HCT116 (cell line): ENCODE measurements at regions of chr9 and their contacts with region 1.

Region 1: GRCh38 chr9:132240753-132241493 is 79.1 kb downstream of the NTNG2 start:
- DNase-seq: peak; percentile 93
- ATAC-seq: peak; percentile 90
- H3K4me3 ChIP-seq: peak overlapping the region; percentile 56 to 69
- H3K27ac ChIP-seq: peak overlapping the region; percentile 56; the same call in 1 of the 2 replicates
- H3K4me1 ChIP-seq: peaks cover 13 to 38% of the 10 kb centered on the region in 2 experiments
- H3K27me3 ChIP-seq: no peaks in the 10 kb centered on the region
- CTCF ChIP-seq: no peak
- POLR2A ChIP-seq: no peak
- RAD21 ChIP-seq: no peak

Region 2: DNA sequence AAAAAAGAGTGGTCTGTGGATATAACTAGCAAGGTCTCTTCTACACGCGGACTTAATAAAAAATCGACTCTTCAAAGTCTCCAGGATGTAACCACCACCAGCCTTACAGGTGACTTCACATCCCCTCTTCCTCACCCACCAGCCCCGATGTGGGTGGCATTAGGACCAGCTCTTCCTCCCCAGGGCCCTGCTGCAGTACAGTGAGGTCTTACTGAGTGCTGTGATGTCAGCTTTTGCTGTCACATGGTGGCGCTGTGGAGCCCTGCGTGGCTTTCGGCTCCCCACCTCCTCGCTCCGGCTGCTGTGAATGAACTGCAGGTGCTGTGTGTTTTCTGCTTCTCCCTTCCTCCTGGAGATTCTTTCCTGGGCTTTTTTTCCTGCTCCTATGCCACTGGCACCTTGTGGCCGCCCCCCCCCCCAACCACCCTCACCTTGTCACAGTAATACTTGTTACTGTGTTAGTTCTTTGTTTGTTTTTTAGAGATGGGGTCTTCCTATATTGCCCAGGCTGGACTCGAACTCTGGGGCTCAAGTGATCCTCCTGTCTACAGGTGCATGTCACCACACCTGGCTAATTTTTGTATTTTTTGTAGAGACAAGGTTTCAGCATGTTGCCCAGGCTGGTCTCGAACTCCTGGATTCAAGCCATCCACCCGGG is 485.3 kb before region 1 on chr9:
- CTCF ChIA-PET with region 1: interaction called, 9 read pairs
- POLR2A ChIA-PET with region 1: no interaction called
- RAD21 ChIA-PET with region 1: interaction called in 1 of 2 experiments, 3 read pairs
- intact Hi-C with region 1: loop called (anchors 2 kb)
- DNase-seq: peak; percentile 75
- ATAC-seq: peak; percentile 100
- H3K4me3 ChIP-seq: no peak overlapping the region
- H3K27ac ChIP-seq: no peak overlapping the region
- H3K4me1 ChIP-seq: peaks cover 0 to 4% of the 10 kb centered on the region in 2 experiments; a peak in 2 of 4 replicates
- H3K27me3 ChIP-seq: no peaks in the 10 kb centered on the region
- CTCF ChIP-seq: peak; percentile 86 to 87 (median 86)
- POLR2A ChIP-seq: no peak
- RAD21 ChIP-seq: peak; percentile 62

Region 3: DNA sequence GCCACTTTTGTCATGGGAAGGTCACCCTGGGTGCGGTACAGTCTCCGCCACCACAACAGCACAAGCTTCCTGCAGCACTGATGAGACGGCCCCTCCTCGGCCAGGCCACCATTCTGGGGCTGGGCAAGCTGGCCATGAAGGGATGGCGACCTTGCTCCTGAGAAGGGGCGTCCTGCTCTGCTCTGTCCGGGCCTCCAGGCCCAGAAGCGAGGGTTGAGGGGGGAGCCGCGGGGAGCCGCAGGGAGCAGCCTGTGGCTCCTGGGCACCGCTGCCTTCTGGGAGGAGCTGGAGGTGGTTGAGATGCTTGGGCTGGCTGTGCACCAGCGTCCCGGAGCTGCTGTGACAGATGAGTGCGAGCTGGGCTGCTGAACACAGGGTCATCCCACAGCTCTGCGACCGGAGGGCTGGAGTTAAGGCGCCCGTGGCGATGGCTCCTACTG is 416.7 kb before region 1 on chr9:
- CTCF ChIA-PET with region 1: no interaction called
- POLR2A ChIA-PET with region 1: no interaction called
- RAD21 ChIA-PET with region 1: no interaction called
- intact Hi-C with region 1: no loop called
- DNase-seq: no peak
- ATAC-seq: no peak
- H3K4me3 ChIP-seq: no peak overlapping the region
- H3K27ac ChIP-seq: no peak overlapping the region
- H3K4me1 ChIP-seq: no peaks in the 10 kb centered on the region
- H3K27me3 ChIP-seq: no peaks in the 10 kb centered on the region; the same call in 1 of the 2 replicates
- CTCF ChIP-seq: no peak
- POLR2A ChIP-seq: no peak
- RAD21 ChIP-seq: no peak

Region 4: GRCh38 chr9:132156262-132156661 is 84.7 kb before region 1 on chr9:
- CTCF ChIA-PET with region 1: no interaction called
- POLR2A ChIA-PET with region 1: no interaction called
- RAD21 ChIA-PET with region 1: no interaction called
- intact Hi-C with region 1: no loop called
- DNase-seq: no peak
- ATAC-seq: no peak
- H3K4me3 ChIP-seq: no peak overlapping the region
- H3K27ac ChIP-seq: no peak overlapping the region
- H3K4me1 ChIP-seq: peaks cover 0 to 8% of the 10 kb centered on the region in 2 experiments; a peak in 1 of 4 replicates
- H3K27me3 ChIP-seq: 0 out of 2 replicates have a peak, but pooled peaks cover 5% of the 10 kb centered on the region
- CTCF ChIP-seq: no peak
- POLR2A ChIP-seq: no peak
- RAD21 ChIP-seq: no peak

Region 5: DNA sequence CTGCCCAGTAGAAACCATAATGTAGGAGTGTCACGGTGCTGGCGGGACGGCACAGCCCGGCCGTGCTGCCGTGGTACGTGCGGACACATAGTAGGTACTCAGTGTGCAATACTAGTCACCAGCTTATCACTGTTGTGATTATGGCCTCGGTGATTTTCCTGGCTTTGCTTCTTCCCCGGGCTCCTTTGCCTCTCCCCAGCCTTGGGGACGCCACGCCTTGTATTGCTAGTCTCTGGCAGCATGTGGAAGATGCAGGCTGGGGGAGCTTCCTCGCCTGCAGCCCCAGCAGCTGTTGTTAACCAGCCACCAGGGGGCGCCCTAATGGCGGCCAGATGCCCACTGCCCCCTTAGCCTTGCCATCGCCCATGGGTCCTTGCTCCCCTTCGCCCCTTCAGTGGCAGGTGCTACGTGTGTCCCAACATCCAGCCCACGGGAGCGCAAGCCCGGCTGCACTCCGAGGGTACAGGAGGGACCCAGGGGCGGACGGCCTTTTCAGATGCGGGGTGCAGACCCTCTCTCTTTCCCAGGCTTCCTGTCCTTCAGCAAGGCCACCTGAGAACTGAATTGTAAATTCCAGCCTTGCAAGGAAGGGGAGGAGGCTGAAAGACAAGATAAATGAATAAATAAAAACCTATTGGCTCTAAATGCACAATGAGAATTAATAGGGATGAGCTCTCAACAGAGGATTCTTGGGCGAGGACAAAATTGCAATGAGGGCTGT is 71.1 kb before region 1 on chr9:
- CTCF ChIA-PET with region 1: interaction called, 154 read pairs
- POLR2A ChIA-PET with region 1: interaction called, 3 read pairs
- RAD21 ChIA-PET with region 1: interaction called, 3 to 11 read pairs
- intact Hi-C with region 1: loop called (anchors 1 kb)
- DNase-seq: peak; percentile 29
- ATAC-seq: peak; percentile 80
- H3K4me3 ChIP-seq: no peak overlapping the region
- H3K27ac ChIP-seq: no peak overlapping the region
- H3K4me1 ChIP-seq: no peaks in the 10 kb centered on the region
- H3K27me3 ChIP-seq: no peaks in the 10 kb centered on the region
- CTCF ChIP-seq: peak; percentile 75 to 94 (median 94); a peak in 5 of 6 replicates
- POLR2A ChIP-seq: no peak
- RAD21 ChIP-seq: peak; percentile 73

Region 6: GRCh38 chr9:132214027-132214622 is 26.8 kb before region 1 on chr9:
- CTCF ChIA-PET with region 1: interaction called, 12 read pairs
- POLR2A ChIA-PET with region 1: no interaction called
- RAD21 ChIA-PET with region 1: no interaction called
- intact Hi-C with region 1: no loop called
- DNase-seq: peak; percentile 22
- ATAC-seq: peak; percentile 90
- H3K4me3 ChIP-seq: no peak overlapping the region
- H3K27ac ChIP-seq: 0 out of 2 replicates have a peak overlapping the region, but pooled peaks have one; percentile 9
- H3K4me1 ChIP-seq: peaks cover 9 to 11% of the 10 kb centered on the region in 2 experiments
- H3K27me3 ChIP-seq: no peaks in the 10 kb centered on the region
- CTCF ChIP-seq: 0 out of 6 replicates have a peak, but pooled peaks of 1 of the 3 experiments have one; percentile 5
- POLR2A ChIP-seq: no peak
- RAD21 ChIP-seq: no peak

Region 7: GRCh38 chr9:132387133-132387532 is 146.2 kb after region 1 on chr9:
- CTCF ChIA-PET with region 1: no interaction called
- POLR2A ChIA-PET with region 1: no interaction called
- RAD21 ChIA-PET with region 1: no interaction called
- intact Hi-C with region 1: no loop called
- DNase-seq: no peak
- ATAC-seq: no peak
- H3K4me3 ChIP-seq: no peak overlapping the region
- H3K27ac ChIP-seq: no peak overlapping the region
- H3K4me1 ChIP-seq: no peaks in the 10 kb centered on the region
- H3K27me3 ChIP-seq: no peaks in the 10 kb centered on the region
- CTCF ChIP-seq: no peak
- POLR2A ChIP-seq: no peak
- RAD21 ChIP-seq: no peak

Region 8: GRCh38 chr9:132806723-132807421 is 565.9 kb after region 1 on chr9:
- CTCF ChIA-PET with region 1: no interaction called
- POLR2A ChIA-PET with region 1: no interaction called
- RAD21 ChIA-PET with region 1: no interaction called
- intact Hi-C with region 1: no loop called
- DNase-seq: no peak
- ATAC-seq: no peak
- H3K4me3 ChIP-seq: no peak overlapping the region
- H3K27ac ChIP-seq: no peak overlapping the region
- H3K4me1 ChIP-seq: no peaks in the 10 kb centered on the region
- H3K27me3 ChIP-seq: no peaks in the 10 kb centered on the region
- CTCF ChIP-seq: no peak
- POLR2A ChIP-seq: no peak
- RAD21 ChIP-seq: no peak